Kidney (tissue), 22 donors: ENCODE measurements at regions of chr7 and their contacts with region 1.

Region 1: DNA sequence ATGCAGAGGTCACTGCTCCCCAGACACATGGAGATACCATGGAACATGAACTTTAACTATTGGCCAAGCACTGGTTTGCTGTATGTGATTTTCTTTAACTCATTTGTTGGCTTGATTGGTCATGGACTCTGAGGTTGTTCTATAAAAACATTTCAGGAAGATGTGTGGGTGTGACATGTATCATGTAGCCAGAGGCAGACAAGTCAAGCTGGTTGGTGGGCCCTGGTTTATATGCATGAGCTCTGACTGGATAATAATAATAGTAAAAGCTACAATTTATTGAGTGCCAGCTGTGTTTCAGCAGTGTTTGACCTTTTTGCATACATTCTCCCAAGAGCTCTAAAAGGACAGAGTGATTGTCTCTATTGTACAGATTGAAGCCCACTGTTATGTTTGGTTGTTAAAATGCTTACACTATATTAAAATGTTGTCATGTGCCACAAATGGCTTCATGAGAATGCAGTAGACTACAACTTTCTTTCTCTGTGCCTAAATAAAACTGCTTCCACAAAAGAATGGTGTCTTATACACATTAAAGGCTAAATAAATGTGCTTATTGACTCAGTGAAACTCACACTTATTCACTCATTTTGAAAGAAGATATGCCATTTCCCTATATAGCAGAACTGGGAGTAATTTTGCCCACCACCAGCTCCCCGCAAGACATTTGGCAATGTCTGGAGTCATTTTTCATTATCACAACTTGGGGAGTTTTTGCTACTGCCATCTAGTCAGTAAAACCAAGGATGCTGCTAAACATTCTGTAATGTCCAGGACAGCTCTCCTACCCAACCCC is 243.6 kb upstream of the NFE2L3 start:
- DNase-seq: peak in 1 of 5 donors; percentile 33
- H3K4me3 ChIP-seq: no peak overlapping the region
- H3K27ac ChIP-seq: no peak overlapping the region
- H3K4me1 ChIP-seq: no peaks in the 10 kb centered on the region
- H3K27me3 ChIP-seq: no peaks in the 10 kb centered on the region
- CTCF ChIP-seq: no peak

Region 2: DNA sequence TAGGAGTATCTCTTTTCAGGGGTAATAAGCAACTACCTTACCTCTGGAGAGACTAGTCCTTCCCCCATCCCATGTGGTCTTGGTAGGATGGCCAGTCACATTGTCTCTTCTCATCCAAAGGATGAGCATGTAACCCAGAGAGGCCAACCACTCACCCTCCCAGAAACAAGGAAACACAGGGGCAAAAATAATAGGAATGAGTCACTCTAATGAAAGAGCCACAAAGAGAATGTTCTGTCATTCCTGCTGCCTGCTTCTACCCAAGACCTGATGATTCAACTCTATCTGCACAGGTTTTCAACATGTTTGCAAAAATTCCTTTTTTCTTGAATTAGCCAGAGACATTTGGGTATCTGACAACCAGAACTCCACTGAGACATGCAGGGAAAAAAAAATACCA is 144.4 kb after region 1 on chr7:
- intact Hi-C with region 1: loop called (anchors 10 kb)
- DNase-seq: no peak
- H3K4me3 ChIP-seq: no peak overlapping the region
- H3K27ac ChIP-seq: no peak overlapping the region
- H3K4me1 ChIP-seq: no peaks in the 10 kb centered on the region
- H3K27me3 ChIP-seq: no peaks in the 10 kb centered on the region
- CTCF ChIP-seq: no peak